ENCODE measurements at regions of chr3 and their contacts with region 1.

Region 1: DNA sequence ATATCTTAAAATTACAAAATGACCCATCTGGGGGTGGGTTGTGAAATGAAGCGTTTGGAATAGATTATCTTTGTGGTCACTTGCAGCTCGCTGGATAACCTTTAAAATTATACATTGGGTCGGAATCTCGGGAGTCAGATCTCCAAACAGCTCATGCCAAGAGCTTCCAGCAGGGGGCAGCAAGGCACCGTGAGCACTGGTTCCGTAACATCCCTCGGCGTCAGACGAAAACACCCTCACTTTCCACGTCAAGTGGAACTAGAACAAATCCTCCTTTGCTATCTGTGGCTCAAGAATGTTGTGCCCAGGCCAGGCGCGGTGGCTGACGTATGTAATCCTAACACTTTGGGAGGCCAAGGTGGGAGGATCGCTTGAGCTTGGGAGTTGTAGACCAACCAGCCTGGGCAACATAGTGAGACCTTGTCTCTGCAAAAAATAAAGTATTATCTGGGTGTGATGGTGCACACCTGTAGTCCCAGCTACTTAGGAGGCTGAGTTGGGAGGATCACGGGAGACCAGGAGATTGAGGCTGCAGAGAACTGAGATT is 31.1 kb downstream of the UMPS start:
- DNase-seq: peak; percentile 64 to 88 (median 74)
- ATAC-seq: peak; percentile 90
- H3K4me3 ChIP-seq: peak overlapping the region; percentile 16
- H3K4me3 Mint-ChIP-seq: peak overlapping the region; percentile 58
- H3K27ac ChIP-seq: no peak overlapping the region
- H3K27ac Mint-ChIP-seq: no peak overlapping the region
- H3K4me1 ChIP-seq: peaks cover 6% of the 10 kb centered on the region
- H3K4me1 Mint-ChIP-seq: peaks cover 6% of the 10 kb centered on the region
- H3K27me3 ChIP-seq: no peaks in the 10 kb centered on the region
- H3K27me3 Mint-ChIP-seq: no peaks in the 10 kb centered on the region
- CTCF ChIP-seq: peak; percentile 94

Region 2: DNA sequence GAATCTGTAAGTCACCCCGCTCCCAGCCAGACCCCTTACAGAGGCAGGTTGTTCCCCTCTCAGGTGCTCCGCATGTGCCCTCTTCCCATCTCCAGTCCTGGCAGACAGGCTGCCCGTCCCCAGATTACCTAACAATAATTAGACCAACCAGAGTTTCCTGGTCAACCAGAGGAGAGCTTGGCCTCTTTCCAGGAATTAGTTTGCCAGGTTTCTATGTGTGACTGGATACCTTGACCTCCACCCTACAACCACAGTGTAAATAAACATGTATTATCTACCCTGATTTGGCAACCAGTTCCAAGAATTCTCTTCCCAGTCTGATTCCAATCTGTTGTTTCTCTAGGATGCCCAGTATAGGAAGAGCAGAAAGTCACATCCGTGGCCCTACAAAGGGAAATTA is 209.1 kb before region 1 on chr3:
- CTCF ChIA-PET with region 1: no interaction called
- POLR2A ChIA-PET with region 1: no interaction called
- intact Hi-C with region 1: no loop called
- DNase-seq: no peak
- ATAC-seq: no peak
- H3K4me3 ChIP-seq: no peak overlapping the region
- H3K4me3 Mint-ChIP-seq: no peak overlapping the region
- H3K27ac ChIP-seq: no peak overlapping the region
- H3K27ac Mint-ChIP-seq: no peak overlapping the region
- H3K4me1 ChIP-seq: no peaks in the 10 kb centered on the region
- H3K4me1 Mint-ChIP-seq: peaks cover 6% of the 10 kb centered on the region
- H3K27me3 ChIP-seq: peaks cover 2 to 36% of the 10 kb centered on the region in 2 experiments
- H3K27me3 Mint-ChIP-seq: peaks cover 62% of the 10 kb centered on the region
- CTCF ChIP-seq: no peak

Region 3: GRCh38 chr3:124772081-124772831 is 10.9 kb after region 1 on chr3:
- CTCF ChIA-PET with region 1: interaction called, 10 read pairs
- POLR2A ChIA-PET with region 1: interaction called, 5 read pairs
- intact Hi-C with region 1: no loop called
- DNase-seq: no peak
- ATAC-seq: no peak
- H3K4me3 ChIP-seq: no peak overlapping the region
- H3K4me3 Mint-ChIP-seq: no peak overlapping the region
- H3K27ac ChIP-seq: no peak overlapping the region
- H3K27ac Mint-ChIP-seq: no peak overlapping the region
- H3K4me1 ChIP-seq: no peaks in the 10 kb centered on the region
- H3K4me1 Mint-ChIP-seq: no peaks in the 10 kb centered on the region
- H3K27me3 ChIP-seq: no peaks in the 10 kb centered on the region
- H3K27me3 Mint-ChIP-seq: peaks cover 17% of the 10 kb centered on the region
- CTCF ChIP-seq: no peak

Region 4: DNA sequence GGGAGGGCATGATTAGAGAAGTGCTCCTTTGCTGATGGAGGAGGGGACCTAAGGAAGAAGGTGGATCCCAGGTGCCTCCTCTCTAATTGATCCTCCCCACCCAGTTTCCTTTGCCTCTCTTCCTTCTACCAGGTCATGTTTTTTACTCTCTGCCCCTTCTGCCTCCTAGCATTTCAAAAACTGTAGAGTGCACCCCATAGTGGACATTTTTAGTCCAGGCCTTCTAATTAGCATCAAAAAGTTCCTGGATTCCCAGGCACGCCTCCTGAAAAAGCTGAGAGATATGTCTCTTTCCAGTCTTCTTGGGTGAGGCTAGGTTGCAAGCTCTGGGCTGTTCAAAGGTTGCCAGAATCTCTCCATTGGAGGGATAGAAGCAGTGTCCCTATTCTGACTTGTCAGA is 144.5 kb after region 1 on chr3:
- CTCF ChIA-PET with region 1: interaction called, 52 read pairs
- POLR2A ChIA-PET with region 1: interaction called, 9 read pairs
- intact Hi-C with region 1: loop called (anchors 1 kb)
- DNase-seq: no peak
- ATAC-seq: no peak
- H3K4me3 ChIP-seq: no peak overlapping the region
- H3K4me3 Mint-ChIP-seq: no peak overlapping the region
- H3K27ac ChIP-seq: no peak overlapping the region
- H3K27ac Mint-ChIP-seq: no peak overlapping the region
- H3K4me1 ChIP-seq: peaks cover 8% of the 10 kb centered on the region
- H3K4me1 Mint-ChIP-seq: peaks cover 2% of the 10 kb centered on the region
- H3K27me3 ChIP-seq: peaks cover 0 to 8% of the 10 kb centered on the region in 2 experiments
- H3K27me3 Mint-ChIP-seq: peaks cover 13% of the 10 kb centered on the region
- CTCF ChIP-seq: no peak

Region 5: DNA sequence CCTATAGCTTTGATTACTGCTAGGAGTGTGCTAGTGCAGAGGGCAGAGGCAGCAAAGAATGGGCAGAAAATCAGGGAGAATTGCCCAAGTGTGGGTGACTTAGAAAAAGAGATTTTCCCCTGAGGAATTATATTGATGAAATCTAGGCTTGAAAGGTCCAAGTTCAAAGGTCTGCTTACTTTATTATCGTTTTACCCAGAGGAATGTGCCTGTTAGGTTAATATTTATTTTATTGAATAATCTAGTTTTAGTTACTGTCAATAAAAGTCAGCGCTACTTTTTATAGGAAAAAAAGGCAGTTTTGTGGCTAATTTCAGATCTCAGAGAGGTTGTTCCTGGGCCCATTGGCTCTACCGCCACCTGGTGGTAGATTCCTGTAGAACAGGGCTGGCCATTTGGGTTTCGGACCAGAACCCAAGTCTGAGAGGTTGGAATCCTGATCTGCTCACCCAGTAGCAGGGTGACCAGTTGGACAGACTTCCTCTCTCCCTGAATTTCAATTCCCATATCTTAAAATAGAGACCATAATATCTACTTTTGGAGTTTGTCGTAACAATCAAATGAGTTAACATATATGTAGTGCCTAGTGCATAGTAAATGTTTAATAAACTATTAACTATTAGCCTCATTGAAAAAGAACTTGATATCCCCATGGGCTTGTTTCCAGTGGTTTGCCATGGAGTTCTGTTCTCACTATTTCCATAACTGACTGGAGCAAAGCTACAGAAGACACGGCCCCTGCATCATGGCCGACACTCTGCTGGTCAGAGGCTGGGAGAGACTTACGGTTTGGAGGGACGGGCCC is 676.5 kb after region 1 on chr3:
- CTCF ChIA-PET with region 1: interaction called, 5 read pairs
- POLR2A ChIA-PET with region 1: no interaction called
- intact Hi-C with region 1: loop called (anchors 1 to 2 kb)
- DNase-seq: peak; percentile 45 to 78 (median 58)
- ATAC-seq: peak; percentile 59
- H3K4me3 ChIP-seq: no peak overlapping the region
- H3K4me3 Mint-ChIP-seq: no peak overlapping the region
- H3K27ac ChIP-seq: no peak overlapping the region
- H3K27ac Mint-ChIP-seq: no peak overlapping the region
- H3K4me1 ChIP-seq: peaks cover 2% of the 10 kb centered on the region
- H3K4me1 Mint-ChIP-seq: no peaks in the 10 kb centered on the region
- H3K27me3 ChIP-seq: no peaks in the 10 kb centered on the region
- H3K27me3 Mint-ChIP-seq: no peaks in the 10 kb centered on the region
- CTCF ChIP-seq: peak; percentile 95

Region 6: DNA sequence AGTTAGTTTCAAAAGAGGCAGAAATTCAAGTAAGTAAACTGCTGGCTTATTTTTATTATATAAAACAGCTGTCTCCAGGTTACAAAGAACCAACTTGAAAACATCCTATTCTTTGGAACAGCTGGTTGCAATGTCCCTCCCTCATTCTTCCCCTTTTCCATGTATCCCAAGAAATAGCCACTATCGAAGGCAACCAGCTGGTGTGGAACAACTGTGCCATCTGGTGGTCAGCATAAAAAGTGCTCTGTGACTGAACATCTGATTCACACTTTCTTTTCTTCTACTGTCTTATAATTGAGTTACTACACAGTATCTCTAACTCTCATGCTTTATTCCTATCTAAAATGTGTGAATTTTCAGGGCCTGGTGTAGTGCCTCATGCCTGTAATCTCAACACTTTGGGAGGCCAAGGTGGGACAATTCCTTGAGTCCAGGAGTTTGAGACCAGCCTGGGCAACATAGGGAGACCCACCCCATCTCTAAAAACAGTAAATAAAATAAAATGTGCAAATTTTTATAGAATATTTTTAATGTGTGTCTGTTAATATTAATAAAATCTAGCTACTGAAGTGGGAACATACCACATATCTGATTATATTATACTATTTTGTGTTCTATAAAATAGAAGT is 824.4 kb after region 1 on chr3:
- CTCF ChIA-PET with region 1: interaction called, 15 read pairs
- POLR2A ChIA-PET with region 1: no interaction called
- intact Hi-C with region 1: loop called (anchors 1 to 10 kb)
- DNase-seq: peak in 12 of 14 experiments; percentile 5 to 70 (median 28)
- ATAC-seq: peak; percentile 46
- H3K4me3 ChIP-seq: no peak overlapping the region
- H3K4me3 Mint-ChIP-seq: no peak overlapping the region
- H3K27ac ChIP-seq: no peak overlapping the region
- H3K27ac Mint-ChIP-seq: no peak overlapping the region
- H3K4me1 ChIP-seq: peaks cover 4% of the 10 kb centered on the region
- H3K4me1 Mint-ChIP-seq: peaks cover 28% of the 10 kb centered on the region
- H3K27me3 ChIP-seq: no peaks in the 10 kb centered on the region
- H3K27me3 Mint-ChIP-seq: no peaks in the 10 kb centered on the region
- CTCF ChIP-seq: peak; percentile 91